SK-N-SH (cell line): ENCODE measurements at regions of chr2 and their contacts with region 1.

Region 1: GRCh38 chr2:219278655-219279516 is at the start of gene DNAJB2:
- DNase-seq: peak; percentile 99
- H3K4me3 ChIP-seq: peak within 1 kb of the TSS; percentile 69 to 82
- H3K27ac ChIP-seq: peak within 1 kb of the TSS; percentile 88 to 91
- H3K4me1 ChIP-seq: peaks cover 24 to 26% of the 10 kb centered on the region in 2 experiments
- H3K27me3 ChIP-seq: no peaks in the 10 kb centered on the region
- CTCF ChIP-seq: no peak
- EP300 ChIP-seq: peak; percentile 57 to 64; a peak in 3 of 4 replicates
- RAD21 ChIP-seq: no peak
- polyA plus RNA-seq, gene DNAJB2: 37.2 and 39.9 TPM in 2 replicates

Region 2: DNA sequence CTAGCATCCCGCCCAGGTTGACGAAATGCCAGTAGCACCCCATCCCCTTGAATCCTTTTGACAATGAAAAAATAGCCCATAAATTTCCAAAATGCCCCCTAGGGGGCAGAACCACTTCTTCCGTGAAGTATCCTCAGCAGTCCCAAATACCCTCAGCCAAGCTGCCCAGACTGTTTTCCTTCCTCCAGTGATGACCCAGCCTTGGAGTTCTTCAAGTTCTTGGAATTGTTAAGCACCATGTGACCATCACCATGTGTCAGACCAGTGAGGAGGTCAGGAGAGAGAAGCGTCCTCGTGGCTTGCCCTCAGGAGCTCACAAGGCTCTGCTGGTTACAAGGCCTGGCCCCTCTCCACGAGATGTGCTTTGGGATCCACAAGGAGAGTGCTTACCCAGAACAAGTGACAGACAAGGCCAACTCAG is 107.6 kb before region 1 on chr2:
- CTCF ChIA-PET with region 1: interaction called, 14 read pairs
- POLR2A ChIA-PET with region 1: no interaction called
- DNase-seq: peak; percentile 73
- H3K4me3 ChIP-seq: no peak overlapping the region; a peak in 1 of 4 replicates
- H3K27ac ChIP-seq: peak overlapping the region; percentile 4 to 5; a peak in 2 of 4 replicates
- H3K4me1 ChIP-seq: peaks cover 0 to 8% of the 10 kb centered on the region in 2 experiments; a peak in 2 of 4 replicates
- H3K27me3 ChIP-seq: no peaks in the 10 kb centered on the region
- CTCF ChIP-seq: peak; percentile 81
- EP300 ChIP-seq: no peak
- RAD21 ChIP-seq: peak; percentile 62

Region 3: DNA sequence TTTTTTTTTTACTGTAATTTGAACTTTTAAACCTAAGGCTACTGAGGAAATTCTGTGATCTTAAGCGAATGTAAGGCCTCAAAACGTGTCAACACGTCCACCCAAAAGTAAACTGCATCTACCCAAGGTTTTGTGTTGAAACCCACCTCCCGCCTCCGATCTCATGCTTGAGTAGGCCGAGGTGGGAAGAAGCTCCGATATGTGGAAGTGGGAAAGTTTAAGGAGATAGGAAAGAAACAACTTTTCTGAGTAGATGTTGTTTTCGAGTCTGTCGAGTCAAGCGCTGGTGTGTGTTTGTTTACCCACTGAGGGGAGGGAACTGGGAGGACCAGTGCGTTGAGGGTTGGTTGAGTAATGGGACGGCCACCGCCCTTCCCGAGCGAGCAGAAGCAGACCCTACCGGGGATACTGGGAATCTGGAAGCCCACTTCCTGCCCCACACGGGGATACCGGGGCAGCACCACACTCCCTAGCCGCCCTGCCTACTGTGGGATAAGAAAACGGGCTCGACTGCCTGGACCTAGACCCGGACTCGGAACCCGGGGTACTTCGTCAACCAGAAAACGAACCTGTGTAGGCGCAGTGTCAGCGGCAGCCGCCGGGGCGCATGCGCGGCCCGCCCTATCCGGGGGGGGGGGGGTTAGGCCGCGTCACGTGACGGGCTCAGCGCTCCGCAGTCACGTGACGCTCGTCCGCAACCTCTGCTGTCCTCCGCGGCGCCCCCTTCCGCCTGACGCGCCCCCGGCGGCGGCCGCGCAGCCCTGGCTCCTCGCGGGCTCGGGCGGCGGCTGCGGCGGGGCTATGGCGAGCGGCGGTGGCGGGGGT is 101.1 kb before region 1 on chr2 and contains the start of gene RETREG2:
- CTCF ChIA-PET with region 1: interaction called, 14 read pairs
- POLR2A ChIA-PET with region 1: interaction called, 6 read pairs
- DNase-seq: peak; percentile 99
- H3K4me3 ChIP-seq: peak within 1 kb of the TSS; percentile 80 to 89
- H3K27ac ChIP-seq: peak within 1 kb of the TSS; percentile 95 to 97
- H3K4me1 ChIP-seq: peaks cover 0 to 17% of the 10 kb centered on the region in 2 experiments; a peak in 2 of 4 replicates
- H3K27me3 ChIP-seq: no peaks in the 10 kb centered on the region
- CTCF ChIP-seq: peak; percentile 39
- EP300 ChIP-seq: 0 out of 4 replicates have a peak, but pooled peaks have one; percentile 12 to 21
- RAD21 ChIP-seq: no peak
- polyA plus RNA-seq, gene RETREG2: 74.6 and 94.8 TPM in 2 replicates

Region 4: GRCh38 chr2:219218732-219219701 is 59.9 kb before region 1 on chr2 and contains the start of gene ABCB6:
- CTCF ChIA-PET with region 1: interaction called, 11 read pairs
- POLR2A ChIA-PET with region 1: interaction called, 6 read pairs
- DNase-seq: peak; percentile 98
- H3K4me3 ChIP-seq: peak within 1 kb of the TSS; percentile 60 to 70
- H3K27ac ChIP-seq: peak within 1 kb of the TSS; percentile 87 to 99
- H3K4me1 ChIP-seq: peaks cover 5 to 30% of the 10 kb centered on the region in 2 experiments; a peak in 3 of 4 replicates
- H3K27me3 ChIP-seq: no peaks in the 10 kb centered on the region
- CTCF ChIP-seq: no peak
- EP300 ChIP-seq: no peak
- RAD21 ChIP-seq: no peak
- polyA plus RNA-seq, gene ABCB6: 26.5 and 27.4 TPM in 2 replicates

Region 5: DNA sequence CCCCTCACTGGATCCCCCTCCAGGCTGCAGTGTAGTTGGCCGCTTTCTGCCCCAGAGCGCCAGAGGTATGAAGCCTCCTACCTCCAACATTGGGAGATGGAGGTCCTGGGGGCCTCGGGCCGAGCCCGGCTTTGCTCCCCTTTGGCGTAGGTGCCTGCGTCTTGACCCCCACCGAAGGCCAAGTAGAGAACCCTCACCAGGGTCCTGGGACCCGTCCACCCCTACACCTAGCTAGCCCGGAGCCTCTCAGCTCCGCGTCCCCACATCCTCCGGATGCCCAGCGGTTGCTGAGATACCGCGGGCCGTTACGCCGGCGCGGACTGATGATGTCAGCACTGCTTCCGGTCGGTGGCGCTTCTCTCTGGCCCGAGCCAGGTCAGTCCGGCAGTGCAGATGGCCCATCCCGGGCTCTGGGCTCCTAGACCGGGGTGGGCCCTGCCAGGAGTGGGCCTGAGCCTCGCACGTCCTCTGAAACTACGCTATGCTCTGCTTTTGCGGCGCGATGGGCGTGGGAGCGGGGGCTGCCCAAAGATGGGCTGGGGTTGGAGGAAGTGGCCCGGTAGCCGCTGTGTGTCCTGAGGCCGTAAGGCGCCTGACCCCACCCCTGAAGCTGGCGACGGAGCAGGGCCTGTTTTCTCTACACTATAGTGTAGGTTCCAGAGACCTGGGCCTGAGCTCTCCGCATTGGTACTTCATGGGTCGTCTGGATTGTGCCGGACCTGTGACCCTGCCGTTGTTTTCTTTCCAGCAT is 33.6 kb before region 1 on chr2 and contains the starts of genes GLB1L and STK16:
- CTCF ChIA-PET with region 1: interaction called, 10 read pairs
- POLR2A ChIA-PET with region 1: interaction called, 3 read pairs
- DNase-seq: peak; percentile 98
- H3K4me3 ChIP-seq: peak within 1 kb of the TSS; percentile 84 to 97
- H3K27ac ChIP-seq: peak within 1 kb of the TSS; percentile 78 to 92
- H3K4me1 ChIP-seq: peaks cover 15 to 26% of the 10 kb centered on the region in 2 experiments
- H3K27me3 ChIP-seq: no peaks in the 10 kb centered on the region
- CTCF ChIP-seq: no peak
- EP300 ChIP-seq: no peak
- RAD21 ChIP-seq: peak; percentile 3; the same call in 1 of the 2 replicates
- polyA plus RNA-seq, gene GLB1L: 11.7 and 14.1 TPM in 2 replicates
- polyA plus RNA-seq, gene STK16: 57.6 and 78.6 TPM in 2 replicates

Region 6: DNA sequence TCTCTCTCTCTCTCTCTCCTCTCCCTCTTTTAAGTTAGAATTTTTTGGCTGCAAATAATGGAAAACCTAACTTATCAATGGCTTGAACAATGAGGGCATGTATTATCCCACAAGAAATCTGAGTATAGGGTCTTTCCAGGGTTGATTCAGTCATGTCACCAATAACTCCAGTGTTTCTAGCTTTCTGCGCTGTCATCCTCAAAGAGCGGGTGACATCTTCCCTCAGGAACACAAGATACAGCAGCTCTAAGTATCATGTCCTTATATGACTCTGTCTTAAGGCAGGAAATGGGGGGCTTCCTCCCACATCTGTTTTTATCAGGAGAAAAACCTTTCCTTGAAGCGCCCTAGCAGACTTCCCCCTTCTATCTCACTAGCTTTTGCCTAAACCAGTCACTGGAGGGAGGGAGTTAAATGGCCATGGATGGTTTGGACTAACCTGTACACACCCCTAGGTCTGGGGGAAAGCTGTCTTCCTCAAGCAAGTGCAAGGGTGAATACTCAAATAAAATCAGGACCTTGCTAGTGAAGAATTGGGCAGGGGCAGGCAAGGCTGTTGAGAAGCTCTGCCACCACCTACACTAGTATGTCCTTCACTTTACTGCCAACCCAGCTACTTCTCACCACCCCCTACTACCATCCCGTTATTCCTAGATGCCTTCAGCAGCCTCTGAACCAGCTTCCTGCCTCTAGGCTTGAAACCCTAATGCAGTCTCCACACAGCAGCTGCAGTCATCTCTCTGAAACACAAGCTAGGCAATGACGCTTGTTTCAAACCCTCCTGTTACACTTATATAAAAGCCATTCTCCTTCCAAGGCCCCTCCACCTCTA is 17.6 kb before region 1 on chr2:
- CTCF ChIA-PET with region 1: interaction called, 62 read pairs
- POLR2A ChIA-PET with region 1: no interaction called
- DNase-seq: no peak
- H3K4me3 ChIP-seq: no peak overlapping the region
- H3K27ac ChIP-seq: no peak overlapping the region
- H3K4me1 ChIP-seq: no peaks in the 10 kb centered on the region
- H3K27me3 ChIP-seq: peaks cover 28% of the 10 kb centered on the region; the same call in 1 of the 2 replicates
- CTCF ChIP-seq: no peak
- EP300 ChIP-seq: no peak
- RAD21 ChIP-seq: no peak

Region 7: GRCh38 chr2:219352448-219353023 is 73.7 kb after region 1 on chr2:
- CTCF ChIA-PET with region 1: interaction called, 20 read pairs
- POLR2A ChIA-PET with region 1: no interaction called
- DNase-seq: peak; percentile 79
- H3K4me3 ChIP-seq: no peak overlapping the region
- H3K27ac ChIP-seq: no peak overlapping the region
- H3K4me1 ChIP-seq: no peaks in the 10 kb centered on the region
- H3K27me3 ChIP-seq: peaks cover 8% of the 10 kb centered on the region
- CTCF ChIP-seq: peak; percentile 79
- EP300 ChIP-seq: no peak
- RAD21 ChIP-seq: peak; percentile 67